K562 (cell line): ENCODE measurements at regions of chr3 and their contacts with region 1.

Region 1: GRCh38 chr3:172179680-172180399 is 140.5 kb downstream of the FNDC3B start:
- DNase-seq: peak; percentile 39 to 68 (median 50)
- ATAC-seq: peak; percentile 79
- H3K4me3 ChIP-seq: no peak overlapping the region
- H3K27ac ChIP-seq: peak overlapping the region; percentile 36; the same call in 1 of the 3 replicates
- H3K4me1 ChIP-seq: peaks cover 6 to 9% of the 10 kb centered on the region in 2 experiments
- H3K27me3 ChIP-seq: no peaks in the 10 kb centered on the region
- CTCF ChIP-seq: no peak
- EP300 ChIP-seq: no peak
- POLR2A ChIP-seq: no peak
- RAD21 ChIP-seq: no peak

Region 2: DNA sequence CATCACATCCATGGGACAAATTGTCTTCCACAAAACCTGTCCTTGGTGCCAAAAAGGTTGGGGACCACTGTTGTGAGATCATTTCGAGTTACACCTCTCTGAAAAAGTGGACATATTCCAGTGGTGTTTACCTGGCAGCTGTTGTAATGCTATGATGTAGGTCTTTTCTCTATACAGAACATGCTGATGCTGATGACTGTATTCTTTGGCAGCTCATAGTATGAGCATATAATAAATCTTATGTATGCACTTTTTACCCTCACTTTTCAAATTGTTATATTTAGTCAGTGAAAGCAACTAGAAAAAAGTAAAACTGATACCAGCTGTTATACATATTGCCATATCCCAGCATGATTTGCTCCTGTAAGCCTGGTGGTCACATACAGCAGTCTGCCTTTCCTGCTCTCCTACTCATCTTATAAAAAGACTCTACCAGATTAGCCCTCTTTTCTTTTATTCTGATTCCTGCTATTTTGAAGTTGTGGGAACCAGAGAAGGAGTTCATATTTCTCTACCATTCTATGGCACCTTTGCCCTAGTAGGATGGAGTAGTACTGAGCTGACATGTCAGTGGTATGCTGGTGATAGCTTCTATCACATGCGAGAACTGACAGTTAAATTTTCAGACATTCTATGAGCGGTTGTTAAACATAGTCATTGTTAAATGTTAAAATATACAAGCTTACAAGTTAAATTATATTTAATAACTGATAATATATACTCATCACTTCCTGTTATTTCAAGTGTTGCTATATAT is 11.8 kb before region 1 on chr3:
- CTCF ChIA-PET with region 1: no interaction called
- POLR2A ChIA-PET with region 1: interaction called, 11 read pairs
- in situ Hi-C with region 1: no loop called
- intact Hi-C with region 1: no loop called
- DNase-seq: no peak
- ATAC-seq: no peak
- H3K4me3 ChIP-seq: no peak overlapping the region
- H3K27ac ChIP-seq: no peak overlapping the region
- H3K4me1 ChIP-seq: no peaks in the 10 kb centered on the region; a peak in 1 of 5 replicates
- H3K27me3 ChIP-seq: no peaks in the 10 kb centered on the region
- CTCF ChIP-seq: no peak
- EP300 ChIP-seq: no peak
- POLR2A ChIP-seq: no peak
- RAD21 ChIP-seq: no peak